Transverse colon (tissue), 4 donors: ENCODE measurements at regions of chr15 and their contacts with region 1.

Region 1: GRCh38 chr15:91291673-91292072 is 191.6 kb downstream of the SV2B start:
- DNase-seq: no peak
- H3K4me3 ChIP-seq: no peak overlapping the region
- H3K27ac ChIP-seq: no peak overlapping the region
- H3K4me1 ChIP-seq: peaks cover 0 to 6% (median 3%) of the 10 kb centered on the region in 4 donors
- H3K27me3 ChIP-seq: peaks cover 36% of the 10 kb centered on the region
- CTCF ChIP-seq: no peak
- EP300 ChIP-seq: no peak
- POLR2A ChIP-seq: no peak

Region 2: GRCh38 chr15:91258425-91258779 is 33.3 kb before region 1 on chr15:
- in situ Hi-C with region 1: no loop called
- intact Hi-C with region 1: loop called (anchors 1 kb)
- DNase-seq: no peak
- H3K4me3 ChIP-seq: no peak overlapping the region
- H3K27ac ChIP-seq: no peak overlapping the region
- H3K4me1 ChIP-seq: peaks cover 0 to 4% (median 0%) of the 10 kb centered on the region in 4 donors
- H3K27me3 ChIP-seq: peaks cover 13% of the 10 kb centered on the region
- CTCF ChIP-seq: no peak
- EP300 ChIP-seq: no peak
- POLR2A ChIP-seq: no peak